Heart left ventricle (tissue), 16 donors: ENCODE measurements at regions of chrX and their contacts with region 1.

Region 1: DNA sequence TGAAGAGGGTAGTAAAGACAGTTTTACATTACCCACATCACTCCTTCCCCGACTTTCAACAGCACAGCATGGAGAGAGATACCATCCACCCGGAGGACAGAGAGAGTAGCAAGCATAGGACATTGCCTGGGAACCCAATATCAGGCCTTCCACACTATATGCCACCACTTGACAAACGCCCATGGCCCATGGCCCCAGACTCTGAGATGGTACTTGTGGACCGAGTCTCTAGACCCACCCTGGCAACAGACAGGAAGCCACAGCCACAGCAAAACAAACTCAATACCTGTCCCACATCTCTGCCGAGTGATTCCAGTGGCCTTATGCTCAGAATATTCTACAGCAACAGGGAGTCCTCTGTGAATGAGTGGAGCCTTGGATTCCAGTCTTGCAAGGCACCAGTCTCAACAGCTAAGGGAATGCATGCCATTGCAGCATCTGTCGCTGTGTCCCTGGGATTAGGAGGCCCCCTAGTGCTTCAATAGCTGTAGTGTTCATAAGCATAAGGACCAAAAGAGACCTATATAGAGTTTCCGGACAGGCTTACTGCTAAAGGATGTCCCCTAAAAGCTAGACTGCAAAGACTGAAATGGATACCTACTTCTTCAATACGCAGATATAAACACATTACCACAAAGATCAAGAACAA is 14.7 kb upstream of the CT55 start:
- DNase-seq: peak in 1 of 5 donors; percentile 8
- ATAC-seq: peak; percentile 58 to 87 (median 82)
- H3K4me3 ChIP-seq: no peak overlapping the region
- H3K27ac ChIP-seq: no peak overlapping the region
- H3K4me1 ChIP-seq: no peaks in the 10 kb centered on the region
- H3K27me3 ChIP-seq: peaks cover 0 to 20% (median 0%) of the 10 kb centered on the region in 9 donors
- CTCF ChIP-seq: peak in 11 of 12 donors; percentile 7 to 58 (median 39)
- POLR2A ChIP-seq: no peak

Region 2: GRCh38 chrX:135477576-135477975 is 291.7 kb after region 1 on chrX:
- intact Hi-C with region 1: loop called in 5 of 10 experiments (anchors 2 to 5 kb)
- DNase-seq: peak; percentile 57 to 85 (median 74)
- ATAC-seq: peak; percentile 55 to 86 (median 72)
- H3K4me3 ChIP-seq: no peak overlapping the region
- H3K27ac ChIP-seq: no peak overlapping the region
- H3K4me1 ChIP-seq: peaks cover 0 to 3% (median 0%) of the 10 kb centered on the region in 12 donors
- H3K27me3 ChIP-seq: peaks cover 0 to 6% (median 0%) of the 10 kb centered on the region in 9 donors
- CTCF ChIP-seq: peak in 9 of 12 donors; percentile 17 to 51 (median 31)
- POLR2A ChIP-seq: no peak